ENCODE measurements at regions of chr18 and their contacts with region 1.

Region 1: DNA sequence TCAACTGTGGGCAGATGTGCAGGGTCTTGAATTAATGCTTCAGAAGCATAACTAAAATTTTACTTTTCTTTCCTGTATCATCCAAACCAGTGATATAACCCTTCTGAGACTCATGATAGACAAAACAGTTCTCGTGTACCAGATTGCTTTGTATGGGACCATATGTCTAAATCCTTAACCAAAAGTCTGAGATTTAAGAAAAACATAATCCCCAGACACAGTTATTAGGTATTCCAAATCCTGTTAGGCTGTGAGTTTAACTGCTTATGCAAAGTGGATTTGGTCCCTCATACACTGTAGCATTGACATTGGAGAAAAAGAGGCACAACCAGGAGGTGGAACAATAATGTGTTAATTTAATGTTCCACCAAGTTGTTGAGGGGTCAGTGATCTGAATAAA is 235.0 kb downstream of the PMAIP1 start:
- DNase-seq: no peak
- H3K4me3 ChIP-seq: no peak overlapping the region
- H3K27ac ChIP-seq: no peak overlapping the region
- H3K4me1 ChIP-seq: no peaks in the 10 kb centered on the region
- H3K27me3 ChIP-seq: no peaks in the 10 kb centered on the region
- CTCF ChIP-seq: no peak
- POLR2A ChIP-seq: no peak

Region 2: DNA sequence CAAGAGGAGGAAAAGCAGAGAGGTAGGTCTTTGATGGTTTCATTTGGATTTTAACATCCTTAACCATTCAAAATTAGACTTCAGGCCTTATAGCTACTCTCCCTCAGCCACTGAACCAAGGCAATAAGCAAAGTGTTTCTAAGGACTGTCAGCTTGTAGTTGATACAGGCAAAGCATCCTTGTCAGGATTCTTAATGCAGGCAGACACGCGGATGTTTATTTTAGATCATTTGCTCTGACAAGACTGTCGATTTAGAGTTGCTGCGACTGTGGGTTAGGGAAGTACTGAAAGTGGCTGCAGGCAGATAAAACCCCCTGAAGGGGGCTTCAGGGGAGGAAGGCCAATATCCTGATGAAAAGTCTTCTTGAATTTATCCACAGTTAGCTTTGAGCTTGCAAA is 1245.0 kb after region 1 on chr18:
- intact Hi-C with region 1: loop called (anchors 5 kb)
- DNase-seq: no peak
- H3K4me3 ChIP-seq: no peak overlapping the region
- H3K27ac ChIP-seq: no peak overlapping the region
- H3K4me1 ChIP-seq: no peaks in the 10 kb centered on the region
- H3K27me3 ChIP-seq: no peaks in the 10 kb centered on the region
- CTCF ChIP-seq: no peak
- POLR2A ChIP-seq: no peak